Activated naive CD4-positive, alpha-beta T cell treated with anti-CD3 and anti-CD28 coated beads for 36 hours (primary cell): ENCODE measurements at regions of chr1 and their contacts with region 1.

Region 1: GRCh38 chr1:174912264-174912663 is 87.5 kb upstream of the CACYBP start:
- DNase-seq: peak; percentile 59
- H3K4me3 Mint-ChIP-seq: no peak overlapping the region
- H3K27ac Mint-ChIP-seq: no peak overlapping the region
- H3K4me1 Mint-ChIP-seq: peaks cover 46% of the 10 kb centered on the region
- H3K27me3 Mint-ChIP-seq: no peaks in the 10 kb centered on the region

Region 2: DNA sequence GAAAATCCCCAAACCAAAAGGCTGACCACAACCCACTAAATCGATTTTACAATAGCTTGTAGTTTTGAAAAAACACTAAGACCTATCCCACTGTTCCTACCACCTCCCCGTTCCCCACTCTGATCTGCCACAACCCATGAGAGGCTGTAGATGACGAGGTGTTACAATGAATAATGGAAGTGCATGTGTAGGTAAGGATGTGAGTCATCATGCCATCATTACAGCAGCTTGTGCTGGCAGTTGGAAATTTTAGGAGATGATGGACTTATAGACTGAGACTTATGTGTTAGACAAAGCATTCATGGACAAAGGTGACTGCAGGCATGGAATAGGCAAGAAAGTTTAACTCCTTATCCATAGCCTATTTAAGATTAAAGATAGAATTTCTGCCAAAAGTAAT is 97.2 kb before region 1 on chr1:
- CTCF ChIA-PET with region 1: no interaction called
- intact Hi-C with region 1: loop called (anchors 2 kb)
- DNase-seq: peak; percentile 65
- H3K4me3 Mint-ChIP-seq: no peak overlapping the region
- H3K27ac Mint-ChIP-seq: peak overlapping the region; percentile 33
- H3K4me1 Mint-ChIP-seq: peaks cover 34% of the 10 kb centered on the region
- H3K27me3 Mint-ChIP-seq: no peaks in the 10 kb centered on the region

Region 3: DNA sequence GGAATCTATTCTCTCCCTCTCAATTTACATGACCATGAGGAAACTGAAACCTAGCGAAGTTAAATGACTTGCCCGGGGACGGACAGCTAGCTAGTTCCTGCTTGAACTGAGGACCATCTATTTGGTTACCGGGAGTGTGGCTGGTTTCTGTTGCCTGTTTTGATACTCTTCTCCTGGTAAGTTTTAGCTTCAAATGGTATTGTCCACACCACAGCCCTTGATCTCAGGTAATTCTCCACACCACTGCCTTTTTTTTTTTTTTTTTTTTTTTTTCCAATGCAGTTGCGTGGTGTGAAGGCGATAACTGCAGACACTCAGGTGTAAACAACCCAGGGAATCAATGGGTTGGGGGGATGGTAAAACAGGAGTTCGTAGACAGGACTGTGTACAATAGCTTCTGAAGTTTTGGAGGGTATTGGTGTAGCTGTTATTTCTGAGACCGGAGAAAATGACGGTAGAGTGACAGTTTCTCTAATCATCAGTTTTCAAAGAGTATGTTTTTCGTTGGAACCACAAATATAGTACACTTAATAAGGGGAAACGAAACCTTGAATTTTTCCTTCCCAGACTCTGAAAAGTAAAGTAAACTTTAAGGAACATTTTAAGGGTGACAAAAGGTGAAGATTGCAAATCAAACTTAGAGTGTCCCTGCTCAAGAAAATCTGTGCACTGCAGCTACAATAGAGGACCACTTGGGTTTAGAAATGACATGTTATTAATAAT is 37.8 kb before region 1 on chr1:
- CTCF ChIA-PET with region 1: no interaction called
- intact Hi-C with region 1: loop called (anchors 2 kb)
- DNase-seq: peak; percentile 11
- H3K4me3 Mint-ChIP-seq: peak overlapping the region; percentile 39
- H3K27ac Mint-ChIP-seq: no peak overlapping the region
- H3K4me1 Mint-ChIP-seq: peaks cover 33% of the 10 kb centered on the region
- H3K27me3 Mint-ChIP-seq: no peaks in the 10 kb centered on the region

Region 4: DNA sequence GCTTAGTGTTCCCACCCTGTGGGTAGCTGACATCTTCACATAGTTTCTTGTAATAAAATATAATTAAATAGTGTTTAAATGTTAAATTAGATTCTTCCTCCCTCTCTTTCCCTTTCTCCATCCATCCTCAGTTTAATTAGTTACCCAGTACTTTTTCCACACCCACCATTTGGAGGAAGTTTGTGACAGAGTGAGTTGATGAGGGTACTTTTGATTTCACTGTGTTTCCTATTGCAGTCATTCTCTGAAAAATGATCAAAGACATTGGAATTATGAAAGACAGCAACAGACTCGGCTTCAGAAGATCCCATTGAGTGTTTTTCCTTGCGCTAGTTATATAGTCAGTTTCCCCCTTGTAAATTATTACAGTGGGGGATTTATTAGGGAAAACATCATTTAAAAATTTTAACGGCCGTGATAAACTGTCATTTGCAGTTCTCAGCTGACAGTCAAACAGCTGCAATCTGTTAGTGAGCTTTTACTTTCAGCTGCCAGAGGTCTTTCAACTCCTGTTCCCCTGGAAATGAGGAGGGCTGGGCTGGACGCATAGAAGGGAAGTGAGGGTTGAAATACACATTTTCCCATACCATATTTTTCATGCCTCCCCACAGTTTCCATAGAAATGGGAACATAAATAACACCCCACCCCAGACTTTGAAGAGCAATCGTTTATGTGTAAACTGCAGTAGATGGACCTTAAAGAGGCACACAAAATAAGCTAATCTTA is 26.2 kb after region 1 on chr1:
- CTCF ChIA-PET with region 1: no interaction called
- intact Hi-C with region 1: loop called (anchors 1 kb)
- DNase-seq: no peak
- H3K4me3 Mint-ChIP-seq: no peak overlapping the region
- H3K27ac Mint-ChIP-seq: no peak overlapping the region
- H3K4me1 Mint-ChIP-seq: peaks cover 7% of the 10 kb centered on the region
- H3K27me3 Mint-ChIP-seq: no peaks in the 10 kb centered on the region